Activated CD4-positive, alpha-beta T cell treated with anti-CD3 and anti-CD28 coated beads for 36 hours (primary cell): ENCODE measurements at regions of chr14 and their contacts with region 1.

Region 1: DNA sequence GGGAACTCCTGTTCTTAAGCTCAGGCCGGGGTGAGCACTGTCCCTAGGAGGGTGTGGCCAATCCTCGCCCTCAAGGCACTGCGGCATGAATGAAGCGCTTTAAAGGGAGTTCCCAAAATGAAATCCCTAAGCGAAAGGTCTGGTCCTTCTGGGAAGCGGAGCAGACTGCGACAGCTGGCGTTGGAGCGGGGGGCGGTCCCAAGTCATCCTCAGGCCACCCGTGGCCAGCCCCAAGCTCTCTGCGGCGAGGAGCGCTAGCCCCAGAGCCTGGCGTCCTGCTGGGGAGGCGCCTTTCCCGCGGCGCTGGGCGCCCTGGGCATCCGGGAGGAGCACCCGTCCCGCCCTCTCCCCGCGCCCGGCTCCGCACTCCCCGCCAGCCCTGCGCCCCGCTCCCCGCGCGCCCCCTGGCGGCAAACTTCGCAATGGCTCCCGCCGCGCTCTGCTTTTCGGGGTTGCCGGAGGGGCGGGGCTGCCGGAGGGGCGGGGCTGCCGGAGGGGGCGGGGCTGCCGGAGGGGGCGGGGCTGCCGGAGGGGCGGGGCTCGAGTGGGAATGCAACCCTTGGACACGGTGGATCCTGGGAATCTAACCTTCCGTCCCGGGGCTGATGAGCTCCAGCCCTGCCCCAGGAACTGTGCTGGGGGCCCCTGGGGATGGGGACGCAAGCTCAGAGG is 25.4 kb downstream of the ZBTB42 start:
- DNase-seq: peak; percentile 97
- ATAC-seq: peak; percentile 93
- H3K4me3 Mint-ChIP-seq: peak overlapping the region; percentile 73
- H3K27ac Mint-ChIP-seq: no peak overlapping the region
- H3K4me1 Mint-ChIP-seq: peaks cover 13% of the 10 kb centered on the region
- H3K27me3 Mint-ChIP-seq: peaks cover 13% of the 10 kb centered on the region

Region 2: GRCh38 chr14:104723648-104724406 is 102.5 kb before region 1 on chr14 and contains the start of gene ADSS1:
- CTCF ChIA-PET with region 1: no interaction called
- POLR2A ChIA-PET with region 1: no interaction called
- intact Hi-C with region 1: loop called in 1 of 2 experiments (anchors 1 kb)
- DNase-seq: peak; percentile 73
- ATAC-seq: peak; percentile 72
- H3K4me3 Mint-ChIP-seq: peak within 1 kb of the TSS; percentile 57
- H3K27ac Mint-ChIP-seq: no peak within 1 kb of the TSS
- H3K4me1 Mint-ChIP-seq: no peaks in the 10 kb centered on the region
- H3K27me3 Mint-ChIP-seq: no peaks in the 10 kb centered on the region
- total RNA-seq, gene ADSS1: 2.2 to 3.2 TPM

Region 3: GRCh38 chr14:104800015-104800770 is 26.1 kb before region 1 on chr14:
- CTCF ChIA-PET with region 1: interaction called, 6 read pairs
- POLR2A ChIA-PET with region 1: no interaction called
- intact Hi-C with region 1: loop called in 1 of 2 experiments (anchors 1 kb)
- DNase-seq: peak; percentile 88
- ATAC-seq: peak; percentile 77
- H3K4me3 Mint-ChIP-seq: peak overlapping the region; percentile 49
- H3K27ac Mint-ChIP-seq: no peak overlapping the region
- H3K4me1 Mint-ChIP-seq: peaks cover 22% of the 10 kb centered on the region
- H3K27me3 Mint-ChIP-seq: no peaks in the 10 kb centered on the region

Region 4: GRCh38 chr14:104876251-104876699 is 50.0 kb after region 1 on chr14:
- CTCF ChIA-PET with region 1: interaction called, 5 read pairs
- POLR2A ChIA-PET with region 1: no interaction called
- intact Hi-C with region 1: loop called in 1 of 2 experiments (anchors 1 kb)
- DNase-seq: peak; percentile 69
- ATAC-seq: peak; percentile 99
- H3K4me3 Mint-ChIP-seq: no peak overlapping the region
- H3K27ac Mint-ChIP-seq: no peak overlapping the region
- H3K4me1 Mint-ChIP-seq: no peaks in the 10 kb centered on the region
- H3K27me3 Mint-ChIP-seq: no peaks in the 10 kb centered on the region

Region 5: GRCh38 chr14:104893435-104894207 is 67.3 kb after region 1 on chr14:
- CTCF ChIA-PET with region 1: no interaction called
- POLR2A ChIA-PET with region 1: no interaction called
- intact Hi-C with region 1: no loop called
- DNase-seq: peak; percentile 5
- ATAC-seq: no peak
- H3K4me3 Mint-ChIP-seq: no peak overlapping the region
- H3K27ac Mint-ChIP-seq: no peak overlapping the region
- H3K4me1 Mint-ChIP-seq: no peaks in the 10 kb centered on the region
- H3K27me3 Mint-ChIP-seq: no peaks in the 10 kb centered on the region